Posterior cingulate gyrus (tissue), 11 donors: ENCODE measurements at regions of chr16 and their contacts with region 1.

Region 1: GRCh38 chr16:3400779-3401688 is at the starts of genes ZNF174 and ZSCAN32:
- DNase-seq: peak; percentile 98 to 100 (median 99)

Region 2: GRCh38 chr16:3364774-3365427 is 36.1 kb before region 1 on chr16:
- intact Hi-C with region 1: loop called (anchors 2 kb)
- DNase-seq: peak; percentile 84 to 98 (median 89)